ENCODE measurements at regions of chr6 and their contacts with region 1.

Region 1: DNA sequence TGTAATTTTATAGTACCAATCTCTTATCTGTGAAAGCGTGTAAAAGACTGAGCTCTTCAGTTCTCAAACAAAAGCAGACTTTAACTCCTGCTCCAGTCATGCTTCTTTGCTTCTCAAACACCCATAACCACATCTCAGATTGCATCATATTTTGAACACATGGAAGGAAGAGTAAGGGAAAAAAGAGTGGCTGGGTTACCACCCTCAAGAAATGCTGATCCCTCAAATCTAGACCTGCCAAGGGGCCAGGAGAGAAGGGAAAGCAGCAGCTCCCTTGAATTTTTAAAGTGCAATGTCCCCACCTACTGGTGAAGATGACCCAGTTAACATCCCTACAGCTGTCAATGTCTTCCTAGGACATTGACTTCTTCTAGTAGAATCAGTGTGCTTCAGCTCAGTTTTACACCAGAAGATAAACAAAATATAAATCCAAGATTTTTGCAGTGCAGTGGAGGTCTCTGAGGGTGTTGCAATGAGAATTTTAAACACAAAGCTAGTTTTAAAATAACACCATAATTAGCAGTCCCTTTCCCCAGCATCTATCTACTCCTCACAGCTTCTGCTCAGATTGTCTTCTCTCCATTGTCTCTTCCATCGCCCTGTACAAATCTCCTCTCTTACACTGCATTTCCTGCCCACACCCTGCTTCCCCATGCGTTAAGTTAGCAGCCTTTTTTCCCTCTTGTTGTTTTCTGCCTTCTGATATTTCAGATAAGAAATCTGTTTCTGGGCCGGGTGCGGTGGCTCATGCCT is 22.6 kb upstream of the HLA-DQB2 start:
- DNase-seq: no peak
- ATAC-seq: peak; percentile 88
- H3K4me3 Mint-ChIP-seq: no peak overlapping the region
- H3K27ac Mint-ChIP-seq: no peak overlapping the region
- H3K4me1 Mint-ChIP-seq: peaks cover 2% of the 10 kb centered on the region
- H3K27me3 Mint-ChIP-seq: no peaks in the 10 kb centered on the region
- CTCF ChIP-seq: no peak

Region 2: DNA sequence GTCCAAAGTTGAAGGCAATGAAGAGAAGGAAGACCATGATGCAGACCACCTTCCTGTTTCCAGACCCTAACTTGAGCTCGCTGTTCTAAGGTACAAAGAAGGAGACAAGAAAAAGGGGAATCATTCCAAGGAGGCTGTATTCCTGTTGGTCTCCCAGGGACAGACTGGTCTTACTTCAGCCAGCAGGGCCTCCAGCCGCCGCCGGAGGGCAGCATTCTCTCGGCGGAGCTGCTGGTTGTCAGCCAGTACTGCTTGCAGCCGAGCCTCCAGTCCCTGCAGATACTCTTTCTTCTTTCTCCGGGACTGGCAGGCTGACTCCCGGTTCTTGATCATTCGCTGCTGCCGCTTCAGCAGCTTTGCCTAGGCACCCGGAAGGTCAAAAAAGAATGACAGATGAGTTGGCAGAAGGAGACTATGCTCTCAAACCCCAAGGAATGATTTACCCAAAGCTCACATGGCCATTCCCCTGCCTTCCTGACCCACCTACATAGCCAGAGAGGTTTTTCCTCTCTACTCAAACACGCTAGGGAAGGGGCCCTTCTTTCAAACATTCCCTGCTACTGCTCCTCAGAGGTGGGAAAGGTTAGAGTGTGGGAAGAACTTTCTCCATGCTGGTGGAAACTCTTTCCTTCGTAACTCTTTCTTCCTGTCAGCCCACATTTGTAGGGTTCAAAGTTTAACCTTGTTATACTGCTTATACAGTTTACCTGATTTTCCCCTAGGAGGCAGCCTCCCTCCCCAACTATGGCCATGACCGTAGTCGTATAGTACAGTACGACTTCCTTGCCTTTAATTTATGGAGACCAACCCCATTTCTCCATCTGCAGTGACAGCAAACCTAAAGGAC is 667.0 kb before region 1 on chr6:
- CTCF ChIA-PET with region 1: interaction called, 10 read pairs
- POLR2A ChIA-PET with region 1: no interaction called
- intact Hi-C with region 1: no loop called
- DNase-seq: peak; percentile 57
- ATAC-seq: peak; percentile 94
- H3K4me3 Mint-ChIP-seq: no peak overlapping the region
- H3K27ac Mint-ChIP-seq: peak overlapping the region; percentile 56
- H3K4me1 Mint-ChIP-seq: peaks cover 8% of the 10 kb centered on the region
- H3K27me3 Mint-ChIP-seq: no peaks in the 10 kb centered on the region
- CTCF ChIP-seq: peak; percentile 57

Region 3: GRCh38 chr6:32424589-32425300 is 361.2 kb before region 1 on chr6:
- CTCF ChIA-PET with region 1: interaction called, 17 read pairs
- POLR2A ChIA-PET with region 1: interaction called, 6 read pairs
- intact Hi-C with region 1: no loop called
- DNase-seq: no peak
- ATAC-seq: no peak
- H3K4me3 Mint-ChIP-seq: no peak overlapping the region
- H3K27ac Mint-ChIP-seq: no peak overlapping the region
- H3K4me1 Mint-ChIP-seq: no peaks in the 10 kb centered on the region
- H3K27me3 Mint-ChIP-seq: peaks cover 5% of the 10 kb centered on the region
- CTCF ChIP-seq: no peak

Region 4: GRCh38 chr6:32700391-32701040 is 85.4 kb before region 1 on chr6:
- CTCF ChIA-PET with region 1: interaction called, 41 read pairs
- POLR2A ChIA-PET with region 1: interaction called, 3 read pairs
- intact Hi-C with region 1: no loop called
- DNase-seq: no peak
- ATAC-seq: peak; percentile 80
- H3K4me3 Mint-ChIP-seq: peak overlapping the region; percentile 86
- H3K27ac Mint-ChIP-seq: peak overlapping the region; percentile 91
- H3K4me1 Mint-ChIP-seq: peaks cover 32% of the 10 kb centered on the region
- H3K27me3 Mint-ChIP-seq: no peaks in the 10 kb centered on the region
- CTCF ChIP-seq: peak; percentile 32

Region 5: DNA sequence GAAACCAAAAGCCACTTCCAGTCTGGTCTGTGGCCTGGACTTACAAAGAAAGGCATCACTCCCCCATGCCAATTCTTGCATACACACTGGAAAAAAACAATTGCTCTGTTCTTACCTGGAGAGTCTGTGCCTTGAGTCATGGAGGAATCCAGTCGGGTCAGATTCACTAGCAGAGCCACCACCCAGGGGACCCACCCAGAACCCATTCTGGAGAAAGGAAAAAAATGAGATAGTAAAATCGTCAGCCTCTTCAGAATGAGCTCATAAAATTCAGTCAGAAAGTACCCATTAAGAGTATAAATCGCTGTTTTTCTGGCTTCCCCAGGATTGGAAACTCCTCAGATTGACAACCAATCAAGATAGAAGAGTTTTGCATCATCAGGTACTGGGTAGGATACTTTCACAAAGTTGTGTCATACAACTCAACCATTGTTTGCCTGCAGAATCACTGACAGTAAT is 30.8 kb after region 1 on chr6 and contains the start of gene HLA-DOB:
- CTCF ChIA-PET with region 1: interaction called, 11 read pairs
- POLR2A ChIA-PET with region 1: no interaction called
- intact Hi-C with region 1: no loop called
- DNase-seq: no peak
- ATAC-seq: peak; percentile 73
- H3K4me3 Mint-ChIP-seq: peak within 1 kb of the TSS; percentile 99
- H3K27ac Mint-ChIP-seq: peak within 1 kb of the TSS; percentile 99
- H3K4me1 Mint-ChIP-seq: peaks cover 96% of the 10 kb centered on the region
- H3K27me3 Mint-ChIP-seq: no peaks in the 10 kb centered on the region
- CTCF ChIP-seq: no peak
- total RNA-seq, gene HLA-DOB: 95.6 and 101 TPM in 2 replicates

Measured in activated B cell treated with CpG ODN at 0.5 μM for 24 hours (primary cell).